ENCODE measurements at regions of chr22 and their contacts with region 1.

Region 1: DNA sequence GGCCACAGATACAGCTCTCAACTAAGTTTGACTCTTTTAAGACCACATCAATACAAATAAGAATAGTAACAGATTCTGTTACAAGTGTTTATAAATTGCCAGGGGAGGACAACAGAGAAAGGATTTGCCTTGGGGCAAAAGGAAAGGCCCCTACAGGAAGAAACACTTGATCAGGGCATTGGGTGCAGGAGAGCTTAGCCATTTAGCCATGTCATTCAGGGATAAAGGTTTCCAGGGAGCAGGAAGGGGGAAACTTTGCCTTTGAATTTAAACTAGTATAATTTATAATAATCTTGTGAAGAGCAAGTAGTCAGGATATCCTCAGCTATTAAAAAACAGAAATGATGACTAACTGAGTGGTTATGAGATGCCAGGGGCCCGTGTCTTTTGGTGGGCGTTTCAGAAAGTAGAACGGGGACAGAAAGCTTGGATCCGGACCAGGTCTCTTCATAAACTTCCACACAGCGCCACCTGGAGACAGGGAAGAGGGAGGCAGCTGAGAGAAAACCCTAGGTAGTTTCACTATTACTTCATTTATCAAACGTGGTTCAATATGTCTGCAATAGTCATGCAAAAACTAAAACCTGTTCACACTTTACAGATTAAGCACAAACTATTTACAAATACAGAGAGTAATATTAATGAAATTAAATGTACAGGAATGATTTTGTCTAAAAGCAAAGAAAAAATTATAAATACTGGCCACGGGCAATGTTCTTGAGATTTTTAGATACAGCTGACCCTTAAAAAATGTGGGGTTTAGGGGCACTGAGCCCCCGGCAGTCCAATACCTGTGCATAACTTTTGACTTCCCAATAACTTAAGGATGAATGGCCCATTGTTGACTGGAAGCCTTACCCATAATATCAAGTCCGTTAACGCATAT is 11.0 kb upstream of the SLC5A4 start:
- H3K4me3 ChIP-seq: no peak overlapping the region
- H3K27ac ChIP-seq: no peak overlapping the region
- H3K4me1 ChIP-seq: no peaks in the 10 kb centered on the region
- CTCF ChIP-seq: no peak; the same call in 1 of the 2 replicates

Region 2: GRCh38 chr22:31977141-31977841 is 288.8 kb before region 1 on chr22:
- CTCF ChIA-PET with region 1: interaction called, 22 read pairs
- POLR2A ChIA-PET with region 1: no interaction called
- H3K4me3 ChIP-seq: no peak overlapping the region
- H3K27ac ChIP-seq: no peak overlapping the region
- H3K4me1 ChIP-seq: no peaks in the 10 kb centered on the region
- CTCF ChIP-seq: peak; percentile 93

Region 3: GRCh38 chr22:32103658-32104315 is 162.3 kb before region 1 on chr22:
- CTCF ChIA-PET with region 1: interaction called, 19 read pairs
- POLR2A ChIA-PET with region 1: no interaction called
- H3K4me3 ChIP-seq: no peak overlapping the region
- H3K27ac ChIP-seq: no peak overlapping the region
- H3K4me1 ChIP-seq: no peaks in the 10 kb centered on the region
- CTCF ChIP-seq: no peak

Region 4: DNA sequence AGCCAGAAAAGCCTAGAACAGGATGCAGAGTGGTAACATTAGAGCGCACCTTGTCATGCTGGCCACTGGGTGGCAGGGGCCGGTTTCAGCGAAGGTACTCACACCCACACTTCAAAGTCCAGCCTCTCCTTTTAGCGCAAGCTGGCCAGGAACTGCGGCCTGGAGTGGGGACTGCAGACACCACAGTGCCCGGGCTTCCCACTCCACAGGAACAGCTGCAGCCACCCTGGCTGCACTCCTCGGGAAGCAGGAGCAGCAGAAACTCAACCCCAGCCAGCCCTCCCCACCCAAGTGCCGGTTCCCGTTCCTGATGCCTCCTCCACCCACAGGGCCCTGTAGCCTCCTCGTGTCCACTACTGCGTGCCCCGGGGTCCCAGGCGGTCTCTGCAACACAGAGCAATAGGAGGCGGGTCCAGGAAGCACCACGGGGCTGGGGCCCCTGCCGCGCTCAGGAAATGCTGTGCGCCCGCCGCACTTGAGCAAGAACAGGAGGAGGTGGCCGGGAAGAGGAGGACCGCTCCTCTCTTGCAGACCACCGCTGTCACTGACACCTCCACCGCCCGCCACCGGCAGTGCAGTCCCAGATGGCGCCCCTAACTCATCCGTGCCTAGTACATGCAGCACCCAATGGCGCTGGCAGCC is 63.5 kb before region 1 on chr22:
- CTCF ChIA-PET with region 1: interaction called, 12 read pairs
- POLR2A ChIA-PET with region 1: no interaction called
- H3K4me3 ChIP-seq: no peak overlapping the region
- H3K27ac ChIP-seq: no peak overlapping the region
- H3K4me1 ChIP-seq: 0 out of 2 replicates have a peak, but pooled peaks cover 3% of the 10 kb centered on the region
- CTCF ChIP-seq: peak; percentile 69

Region 5: GRCh38 chr22:32248276-32248675 is 17.8 kb before region 1 on chr22:
- CTCF ChIA-PET with region 1: interaction called, 18 read pairs
- POLR2A ChIA-PET with region 1: no interaction called
- H3K4me3 ChIP-seq: no peak overlapping the region
- H3K27ac ChIP-seq: no peak overlapping the region
- H3K4me1 ChIP-seq: no peaks in the 10 kb centered on the region
- CTCF ChIP-seq: no peak

Region 6: DNA sequence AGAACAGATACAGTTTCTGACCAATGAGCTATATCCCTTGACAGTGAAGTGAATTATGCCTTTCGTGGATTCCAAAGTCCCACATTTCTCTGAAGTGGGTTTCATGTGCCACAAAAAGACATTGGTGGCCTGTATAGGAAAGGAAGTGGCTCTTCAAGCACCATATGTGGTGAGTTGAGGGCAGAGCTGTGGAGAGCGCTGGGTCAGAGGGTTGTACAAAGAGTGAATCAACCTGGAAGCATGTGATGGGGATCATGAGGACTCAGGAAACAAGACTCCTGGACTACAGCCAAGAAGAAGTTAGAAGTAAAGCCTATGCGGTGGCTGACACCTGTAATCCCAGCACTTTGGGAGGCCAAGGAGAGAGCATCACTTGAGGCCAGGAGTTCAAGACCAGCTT is 10.4 kb before region 1 on chr22:
- CTCF ChIA-PET with region 1: interaction called, 12 read pairs
- POLR2A ChIA-PET with region 1: no interaction called
- H3K4me3 ChIP-seq: no peak overlapping the region
- H3K27ac ChIP-seq: no peak overlapping the region
- H3K4me1 ChIP-seq: no peaks in the 10 kb centered on the region
- CTCF ChIP-seq: no peak

Region 7: GRCh38 chr22:32281072-32281471 is 14.9 kb after region 1 on chr22:
- CTCF ChIA-PET with region 1: interaction called, 39 read pairs
- POLR2A ChIA-PET with region 1: interaction called, 3 read pairs
- H3K4me3 ChIP-seq: no peak overlapping the region
- H3K27ac ChIP-seq: no peak overlapping the region
- H3K4me1 ChIP-seq: no peaks in the 10 kb centered on the region
- CTCF ChIP-seq: no peak

Region 8: GRCh38 chr22:32309585-32310251 is 43.6 kb after region 1 on chr22:
- CTCF ChIA-PET with region 1: no interaction called
- POLR2A ChIA-PET with region 1: no interaction called
- H3K4me3 ChIP-seq: no peak overlapping the region
- H3K27ac ChIP-seq: no peak overlapping the region
- H3K4me1 ChIP-seq: no peaks in the 10 kb centered on the region
- CTCF ChIP-seq: no peak

Measured in HEK293 (cell line).